ENCODE measurements at regions of chr13 and their contacts with region 1.

Region 1: GRCh38 chr13:113951246-113951999 is 22.5 kb downstream of the C13orf46 start:
- DNase-seq: peak; percentile 92
- ATAC-seq: peak; percentile 97

Region 2: DNA sequence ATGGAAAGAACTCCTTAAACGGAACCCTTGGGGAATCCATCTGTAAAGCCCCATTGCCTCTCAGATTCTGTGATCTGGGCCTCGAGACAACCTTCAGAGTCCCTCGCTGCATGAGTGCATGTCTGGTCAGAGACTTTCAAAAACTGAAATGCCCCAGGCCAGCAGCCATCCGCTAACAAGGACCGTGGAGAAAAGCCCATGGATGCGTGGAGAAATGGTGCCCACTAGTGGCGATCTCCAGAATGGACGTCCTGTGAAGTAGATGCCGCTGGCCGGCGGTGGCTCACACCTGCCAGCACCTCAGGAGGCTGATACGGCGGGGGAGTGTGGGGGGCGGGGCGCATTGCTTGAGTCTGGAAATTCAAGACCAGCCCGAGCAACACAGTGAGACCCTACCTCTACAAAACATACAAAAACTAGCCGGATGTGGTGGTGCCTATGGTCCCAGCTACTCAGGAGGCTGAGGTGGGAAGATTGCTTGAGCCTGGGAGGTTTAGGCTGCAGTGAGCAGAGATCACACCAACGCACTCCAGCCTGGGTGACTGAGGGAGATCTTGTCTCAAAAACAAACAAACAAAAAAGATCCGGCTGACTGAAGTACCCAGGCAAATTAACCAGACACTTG is 275.4 kb after region 1 on chr13:
- intact Hi-C with region 1: loop called (anchors 1 kb)
- DNase-seq: peak; percentile 88
- ATAC-seq: peak; percentile 93

Measured in Right ventricle myocardium superior (tissue), 1 donor.